ENCODE measurements at regions of chr3 and their contacts with region 1.

Region 1: DNA sequence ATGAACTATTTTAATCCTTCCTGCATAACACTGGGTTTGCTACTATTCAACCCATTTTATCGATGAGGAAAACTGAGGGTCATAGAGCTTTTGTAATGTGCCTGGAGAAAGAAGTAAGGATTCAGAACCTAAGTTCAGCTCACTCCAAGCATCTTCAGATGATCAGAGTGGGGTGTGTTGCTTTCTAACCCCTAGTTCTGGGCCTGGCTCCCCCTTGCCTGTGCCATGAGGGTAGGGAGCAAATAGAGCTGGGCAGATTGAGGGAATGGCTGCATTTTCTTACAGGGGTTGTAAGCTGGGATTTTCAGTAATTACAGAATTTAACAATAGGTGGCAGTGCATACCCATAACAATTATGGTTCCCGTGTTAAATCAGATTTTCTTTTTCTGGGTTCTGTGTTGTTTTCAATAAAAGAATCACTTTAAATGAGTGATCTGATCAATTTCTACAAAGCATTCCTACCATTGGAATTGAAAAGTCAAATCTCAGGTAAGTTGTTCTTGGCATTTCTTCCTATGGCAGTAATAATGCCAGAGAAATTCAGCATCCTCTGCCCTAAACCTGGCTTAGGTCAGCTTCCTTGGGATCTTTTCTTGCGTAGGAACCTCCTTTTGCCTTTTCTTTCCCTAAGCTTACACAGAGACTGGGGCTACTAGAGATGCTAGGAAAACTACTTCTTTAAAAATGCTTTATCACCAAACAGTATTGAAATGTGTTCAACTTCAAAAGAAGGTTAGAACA is 103.8 kb upstream of the IL12A start:
- DNase-seq: no peak
- H3K4me3 Mint-ChIP-seq: no peak overlapping the region
- H3K27ac Mint-ChIP-seq: no peak overlapping the region
- H3K4me1 Mint-ChIP-seq: no peaks in the 10 kb centered on the region
- H3K27me3 Mint-ChIP-seq: peaks cover 7% of the 10 kb centered on the region

Region 2: GRCh38 chr3:159775372-159775961 is 109.4 kb before region 1 on chr3:
- CTCF ChIA-PET with region 1: no interaction called
- DNase-seq: no peak
- H3K4me3 Mint-ChIP-seq: no peak overlapping the region
- H3K27ac Mint-ChIP-seq: no peak overlapping the region
- H3K4me1 Mint-ChIP-seq: no peaks in the 10 kb centered on the region
- H3K27me3 Mint-ChIP-seq: peaks cover 17% of the 10 kb centered on the region

Region 3: GRCh38 chr3:159950156-159950898 is 65.5 kb after region 1 on chr3:
- CTCF ChIA-PET with region 1: no interaction called
- DNase-seq: no peak
- H3K4me3 Mint-ChIP-seq: no peak overlapping the region
- H3K27ac Mint-ChIP-seq: no peak overlapping the region
- H3K4me1 Mint-ChIP-seq: no peaks in the 10 kb centered on the region
- H3K27me3 Mint-ChIP-seq: peaks cover 4% of the 10 kb centered on the region

Region 4: GRCh38 chr3:160003520-160004128 is 118.8 kb after region 1 on chr3:
- CTCF ChIA-PET with region 1: interaction called, 106 read pairs
- DNase-seq: peak; percentile 54
- H3K4me3 Mint-ChIP-seq: no peak overlapping the region
- H3K27ac Mint-ChIP-seq: no peak overlapping the region
- H3K4me1 Mint-ChIP-seq: peaks cover 3% of the 10 kb centered on the region
- H3K27me3 Mint-ChIP-seq: no peaks in the 10 kb centered on the region

Region 5: DNA sequence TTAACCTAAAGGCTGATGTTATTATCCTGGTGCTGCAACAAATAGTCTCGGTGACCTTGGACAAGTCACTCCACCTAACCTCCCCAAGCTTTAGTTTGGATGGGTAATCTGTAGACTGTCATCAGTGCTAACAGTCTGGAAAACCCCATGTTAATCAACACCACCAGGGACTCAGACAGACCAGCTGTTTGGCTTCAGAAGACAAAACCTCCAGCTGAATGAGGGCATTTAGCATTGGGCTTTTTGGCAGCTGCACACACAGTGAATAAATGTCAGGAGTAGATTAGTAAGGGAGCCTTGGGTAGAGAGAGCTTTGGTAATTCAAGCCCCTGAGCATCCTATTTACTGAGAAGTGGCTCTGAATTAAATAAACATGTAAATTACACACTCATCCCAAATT is 315.5 kb after region 1 on chr3:
- CTCF ChIA-PET with region 1: no interaction called
- DNase-seq: no peak
- H3K4me3 Mint-ChIP-seq: no peak overlapping the region
- H3K27ac Mint-ChIP-seq: no peak overlapping the region
- H3K4me1 Mint-ChIP-seq: no peaks in the 10 kb centered on the region
- H3K27me3 Mint-ChIP-seq: peaks cover 7% of the 10 kb centered on the region

Region 6: DNA sequence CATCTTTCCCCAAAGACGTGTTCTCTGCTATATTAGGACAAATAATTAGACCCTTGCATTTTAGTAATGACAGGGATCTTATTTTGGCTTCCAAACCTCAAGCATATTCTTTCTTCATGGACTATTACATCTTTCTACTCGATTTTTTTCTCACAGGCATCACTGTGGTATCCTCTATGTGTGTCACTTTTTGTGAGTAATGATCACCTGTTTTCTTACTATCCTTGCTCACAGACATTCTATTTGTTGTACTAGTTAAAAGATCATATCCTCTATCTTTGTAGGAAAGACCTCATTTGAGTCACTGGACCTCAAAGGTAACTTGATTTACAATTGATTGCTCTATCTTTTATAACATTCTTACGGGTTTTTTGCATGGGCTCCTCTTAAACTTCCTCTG is 347.2 kb after region 1 on chr3:
- CTCF ChIA-PET with region 1: no interaction called
- DNase-seq: no peak
- H3K4me3 Mint-ChIP-seq: no peak overlapping the region
- H3K27ac Mint-ChIP-seq: no peak overlapping the region
- H3K4me1 Mint-ChIP-seq: no peaks in the 10 kb centered on the region
- H3K27me3 Mint-ChIP-seq: peaks cover 40% of the 10 kb centered on the region

Region 7: GRCh38 chr3:160413613-160414248 is 528.9 kb after region 1 on chr3:
- CTCF ChIA-PET with region 1: interaction called, 12 read pairs
- DNase-seq: peak; percentile 76
- H3K4me3 Mint-ChIP-seq: no peak overlapping the region
- H3K27ac Mint-ChIP-seq: peak overlapping the region; percentile 66
- H3K4me1 Mint-ChIP-seq: peaks cover 56% of the 10 kb centered on the region
- H3K27me3 Mint-ChIP-seq: no peaks in the 10 kb centered on the region